Panc1 (cell line): ENCODE measurements at regions of chr18 and their contacts with region 1.

Region 1: DNA sequence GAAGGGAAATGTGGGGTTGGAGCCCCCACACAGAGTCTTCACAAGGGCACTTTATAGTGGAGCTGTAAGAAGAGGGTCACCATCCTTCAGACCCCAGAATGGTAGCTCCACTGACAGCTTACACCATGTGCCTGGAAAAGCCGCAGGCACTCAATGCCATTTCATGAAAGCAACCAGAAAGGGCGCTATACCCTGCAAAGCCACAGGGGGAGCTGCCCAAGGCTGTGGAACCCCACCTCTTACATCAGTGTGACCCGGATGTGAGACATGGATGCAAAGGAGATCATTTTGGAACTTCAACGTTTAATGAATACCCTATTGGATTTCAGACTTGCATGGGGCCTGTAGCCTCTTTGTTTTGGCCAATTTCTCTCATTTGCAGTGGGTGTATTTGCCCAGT is 694.7 kb downstream of the CBLN2 start:
- DNase-seq: no peak
- ATAC-seq: no peak
- H3K4me3 ChIP-seq: no peak overlapping the region
- H3K27ac ChIP-seq: no peak overlapping the region
- H3K4me1 ChIP-seq: no peaks in the 10 kb centered on the region
- H3K27me3 ChIP-seq: no peaks in the 10 kb centered on the region
- CTCF ChIP-seq: no peak

Region 2: GRCh38 chr18:70808481-70809056 is 1040.8 kb before region 1 on chr18:
- CTCF ChIA-PET with region 1: no interaction called
- POLR2A ChIA-PET with region 1: no interaction called
- in situ Hi-C with region 1: no loop called
- intact Hi-C with region 1: no loop called
- DNase-seq: no peak
- ATAC-seq: no peak
- H3K4me3 ChIP-seq: no peak overlapping the region
- H3K27ac ChIP-seq: no peak overlapping the region
- H3K4me1 ChIP-seq: no peaks in the 10 kb centered on the region
- H3K27me3 ChIP-seq: no peaks in the 10 kb centered on the region
- CTCF ChIP-seq: no peak

Region 3: GRCh38 chr18:71865888-71866287 is 16.5 kb after region 1 on chr18:
- CTCF ChIA-PET with region 1: no interaction called
- POLR2A ChIA-PET with region 1: interaction called, 22 read pairs
- in situ Hi-C with region 1: no loop called
- intact Hi-C with region 1: no loop called
- DNase-seq: no peak
- ATAC-seq: no peak
- H3K4me3 ChIP-seq: no peak overlapping the region
- H3K27ac ChIP-seq: no peak overlapping the region
- H3K4me1 ChIP-seq: no peaks in the 10 kb centered on the region
- H3K27me3 ChIP-seq: no peaks in the 10 kb centered on the region
- CTCF ChIP-seq: no peak

Region 4: DNA sequence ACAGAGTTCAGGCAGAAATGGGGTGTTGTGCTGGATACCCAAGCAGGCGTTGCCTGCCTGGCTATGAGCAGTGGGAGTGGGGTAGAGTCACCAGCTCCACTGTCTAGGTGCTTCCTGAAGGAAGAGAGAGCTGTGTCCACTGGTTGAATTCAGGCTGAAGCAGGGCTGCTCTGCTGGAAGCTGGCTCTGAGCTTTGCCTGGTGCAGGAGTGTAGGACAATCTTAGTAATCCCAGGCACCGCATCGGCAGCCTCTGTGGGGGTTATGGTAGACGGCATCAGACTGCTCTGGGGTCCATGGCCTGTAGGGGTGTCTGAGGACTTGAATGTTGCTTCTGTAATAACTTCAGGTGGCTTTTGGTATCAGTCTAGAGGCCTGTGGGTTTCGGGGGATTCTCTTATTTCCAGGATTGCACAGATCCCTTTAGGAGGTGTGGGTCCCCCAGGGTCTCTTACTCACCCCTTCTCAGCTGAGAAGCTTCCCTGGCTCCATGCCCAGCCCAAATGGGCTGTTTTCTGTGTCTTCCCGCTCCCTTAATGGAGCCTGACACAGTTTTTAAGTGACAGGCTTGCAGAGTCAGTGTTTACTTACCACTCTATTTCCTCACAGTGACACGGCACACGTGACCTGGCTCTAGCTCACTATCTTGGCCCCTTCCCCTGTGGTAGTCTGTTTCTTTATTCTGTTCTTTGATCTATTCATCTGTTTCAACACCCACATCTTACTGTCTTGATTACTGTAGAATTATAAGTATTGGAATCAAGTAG is 50.5 kb after region 1 on chr18:
- CTCF ChIA-PET with region 1: no interaction called
- POLR2A ChIA-PET with region 1: no interaction called
- in situ Hi-C with region 1: no loop called
- intact Hi-C with region 1: no loop called
- DNase-seq: no peak
- ATAC-seq: no peak
- H3K4me3 ChIP-seq: no peak overlapping the region
- H3K27ac ChIP-seq: no peak overlapping the region
- H3K4me1 ChIP-seq: no peaks in the 10 kb centered on the region
- H3K27me3 ChIP-seq: no peaks in the 10 kb centered on the region
- CTCF ChIP-seq: no peak